Prostate gland (tissue), 2 donors: ENCODE measurements at regions of chr15 and their contacts with region 1.

Region 1: DNA sequence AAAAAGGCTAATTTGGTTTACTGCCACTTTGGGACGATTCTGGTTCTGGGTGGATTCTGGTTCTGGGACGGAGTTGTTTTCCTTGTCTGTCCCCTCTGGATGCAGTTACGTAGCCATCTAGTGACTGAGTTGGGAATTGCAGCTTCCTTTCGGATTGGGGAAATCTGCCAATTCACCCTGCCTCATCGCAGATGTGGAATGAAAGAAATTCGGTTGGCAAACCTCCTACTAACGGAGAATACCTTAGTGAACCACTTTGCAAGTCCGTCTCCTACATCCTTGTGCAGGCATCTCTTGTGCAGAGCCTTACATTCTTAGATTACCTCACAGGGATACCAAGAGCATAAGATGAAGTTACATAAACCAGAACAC is 31.5 kb upstream of the AP4E1 start:
- DNase-seq: peak; percentile 77
- H3K4me3 ChIP-seq: peak overlapping the region; percentile 6 to 21
- H3K27ac ChIP-seq: no peak overlapping the region
- H3K4me1 ChIP-seq: no peaks in the 10 kb centered on the region
- H3K27me3 ChIP-seq: no peaks in the 10 kb centered on the region
- CTCF ChIP-seq: peak; percentile 75 to 93 (median 90)
- POLR2A ChIP-seq: no peak

Region 2: GRCh38 chr15:49810720-49811119 is 1066.3 kb before region 1 on chr15:
- intact Hi-C with region 1: no loop called
- DNase-seq: no peak
- H3K4me3 ChIP-seq: no peak overlapping the region
- H3K27ac ChIP-seq: no peak overlapping the region
- H3K4me1 ChIP-seq: no peaks in the 10 kb centered on the region
- H3K27me3 ChIP-seq: no peaks in the 10 kb centered on the region
- CTCF ChIP-seq: no peak
- POLR2A ChIP-seq: no peak

Region 3: GRCh38 chr15:50675536-50676144 is 201.3 kb before region 1 on chr15:
- intact Hi-C with region 1: loop called (anchors 2 kb)
- DNase-seq: no peak
- H3K4me3 ChIP-seq: no peak overlapping the region
- H3K27ac ChIP-seq: no peak overlapping the region
- H3K4me1 ChIP-seq: no peaks in the 10 kb centered on the region
- H3K27me3 ChIP-seq: no peaks in the 10 kb centered on the region
- CTCF ChIP-seq: peak; percentile 38 to 85 (median 78)
- POLR2A ChIP-seq: no peak

Region 4: GRCh38 chr15:50712018-50712417 is 165.0 kb before region 1 on chr15:
- intact Hi-C with region 1: no loop called
- DNase-seq: no peak
- H3K4me3 ChIP-seq: no peak overlapping the region
- H3K27ac ChIP-seq: no peak overlapping the region
- H3K4me1 ChIP-seq: no peaks in the 10 kb centered on the region
- H3K27me3 ChIP-seq: no peaks in the 10 kb centered on the region
- CTCF ChIP-seq: no peak
- POLR2A ChIP-seq: no peak

Region 5: GRCh38 chr15:50765195-50765973 is 111.6 kb before region 1 on chr15 and contains the start of gene SPPL2A:
- intact Hi-C with region 1: loop called (anchors 5 kb)
- DNase-seq: peak; percentile 76
- H3K4me3 ChIP-seq: peak within 1 kb of the TSS; percentile 93 to 96
- H3K27ac ChIP-seq: peak within 1 kb of the TSS; percentile 94 to 95
- H3K4me1 ChIP-seq: no peaks in the 10 kb centered on the region
- H3K27me3 ChIP-seq: no peaks in the 10 kb centered on the region
- CTCF ChIP-seq: no peak
- POLR2A ChIP-seq: peak; percentile 75
- total RNA-seq, gene SPPL2A: 129 to 335 TPM